Activated naive CD8-positive, alpha-beta T cell treated with anti-CD3 and anti-CD28 coated beads, Interleukin-2, amount 10 ng/mL, durations not matched to agents 7 days and 5 days (primary cell): ENCODE measurements at regions of chr22 and their contacts with region 1.

Region 1: GRCh38 chr22:30238661-30239420 is 7.7 kb downstream of the LIF start:
- DNase-seq: peak; percentile 67
- ATAC-seq: peak; percentile 38
- H3K4me3 Mint-ChIP-seq: peak overlapping the region; percentile 34
- H3K27ac Mint-ChIP-seq: peak overlapping the region; percentile 81
- H3K4me1 Mint-ChIP-seq: peaks cover 69% of the 10 kb centered on the region
- H3K27me3 Mint-ChIP-seq: no peaks in the 10 kb centered on the region

Region 2: GRCh38 chr22:30116362-30117117 is 122.3 kb before region 1 on chr22:
- POLR2A ChIA-PET with region 1: interaction called, 11 read pairs
- DNase-seq: no peak
- ATAC-seq: peak; percentile 26
- H3K4me3 Mint-ChIP-seq: no peak overlapping the region
- H3K27ac Mint-ChIP-seq: peak overlapping the region; percentile 11
- H3K4me1 Mint-ChIP-seq: peaks cover 35% of the 10 kb centered on the region
- H3K27me3 Mint-ChIP-seq: no peaks in the 10 kb centered on the region

Region 3: GRCh38 chr22:30150212-30150611 is 88.6 kb before region 1 on chr22:
- POLR2A ChIA-PET with region 1: no interaction called
- DNase-seq: no peak
- ATAC-seq: no peak
- H3K4me3 Mint-ChIP-seq: no peak overlapping the region
- H3K27ac Mint-ChIP-seq: no peak overlapping the region
- H3K4me1 Mint-ChIP-seq: peaks cover 7% of the 10 kb centered on the region
- H3K27me3 Mint-ChIP-seq: no peaks in the 10 kb centered on the region

Region 4: GRCh38 chr22:30253205-30253852 is 14.5 kb after region 1 on chr22:
- POLR2A ChIA-PET with region 1: interaction called, 11 read pairs
- DNase-seq: no peak
- ATAC-seq: no peak
- H3K4me3 Mint-ChIP-seq: peak overlapping the region; percentile 75
- H3K27ac Mint-ChIP-seq: peak overlapping the region; percentile 93
- H3K4me1 Mint-ChIP-seq: peaks cover 46% of the 10 kb centered on the region
- H3K27me3 Mint-ChIP-seq: no peaks in the 10 kb centered on the region